SK-N-SH (cell line): ENCODE measurements at regions of chr1 and their contacts with region 1.

Region 1: GRCh38 chr1:1019122-1019999 is 559 bp upstream of the AGRN start:
- DNase-seq: peak; percentile 99
- H3K4me3 ChIP-seq: peak overlapping the region in 1 of 2 experiments; percentile 50; a peak in 2 of 4 replicates
- H3K27ac ChIP-seq: peak overlapping the region in 1 of 2 experiments; percentile 81; a peak in 2 of 4 replicates
- H3K4me1 ChIP-seq: peaks cover 0 to 10% of the 10 kb centered on the region in 2 experiments; a peak in 1 of 4 replicates
- H3K27me3 ChIP-seq: no peaks in the 10 kb centered on the region
- CTCF ChIP-seq: peak; percentile 44
- EP300 ChIP-seq: no peak
- RAD21 ChIP-seq: no peak

Region 2: DNA sequence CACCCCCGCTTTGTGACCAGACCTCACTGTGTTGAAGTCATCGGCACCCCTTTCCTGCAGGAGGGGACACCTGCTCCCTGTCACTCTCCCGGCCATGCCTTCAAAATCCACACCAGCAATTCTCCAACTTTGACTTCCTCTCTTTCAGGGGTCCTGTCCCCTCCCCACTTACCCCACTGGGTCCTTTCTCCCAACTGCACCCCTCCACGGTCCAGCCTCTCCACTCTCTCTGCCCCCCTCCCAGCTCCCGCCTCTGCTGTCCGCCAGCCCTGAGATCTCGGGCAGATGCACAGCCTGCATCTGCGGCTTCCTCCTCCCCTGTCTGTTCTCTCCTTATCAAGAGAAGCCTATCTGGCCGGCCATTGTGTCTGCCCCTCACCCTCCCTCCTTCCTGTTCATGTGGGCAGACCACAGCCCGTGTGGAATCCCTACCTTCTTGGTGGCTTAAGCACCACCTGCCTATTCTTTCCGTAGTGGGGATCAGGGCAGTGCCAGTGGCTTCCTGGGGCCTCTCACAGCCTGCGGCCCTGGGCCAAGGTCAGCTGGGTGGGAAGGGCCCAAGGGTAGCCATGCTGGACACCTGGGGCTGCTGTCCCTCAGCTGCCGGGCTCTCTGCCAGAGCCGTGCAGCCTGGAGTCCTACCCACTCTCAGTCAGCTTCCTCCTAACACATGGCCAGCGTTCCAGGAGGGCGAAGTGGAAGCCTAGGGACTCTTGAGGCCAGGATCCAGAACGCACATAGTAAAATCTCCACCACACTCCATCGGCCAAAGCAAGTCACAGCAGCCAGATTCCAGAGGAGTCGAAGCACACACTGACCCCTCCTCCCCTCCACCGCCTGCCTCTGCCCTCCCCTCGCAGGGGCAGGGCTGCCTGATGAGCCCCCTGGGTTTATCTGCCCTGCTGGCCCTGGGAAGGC is 14.3 kb before region 1 on chr1:
- CTCF ChIA-PET with region 1: interaction called, 46 read pairs
- POLR2A ChIA-PET with region 1: interaction called, 5 read pairs
- DNase-seq: peak; percentile 90
- H3K4me3 ChIP-seq: peak overlapping the region in 1 of 2 experiments; percentile 18; a peak in 1 of 4 replicates
- H3K27ac ChIP-seq: peak overlapping the region in 1 of 2 experiments; percentile 98; a peak in 2 of 4 replicates
- H3K4me1 ChIP-seq: peaks cover 0 to 43% of the 10 kb centered on the region in 2 experiments; a peak in 1 of 4 replicates
- H3K27me3 ChIP-seq: peaks cover 7% of the 10 kb centered on the region; the same call in 1 of the 2 replicates
- CTCF ChIP-seq: no peak
- EP300 ChIP-seq: peak in 1 of 2 experiments; percentile 25; a peak in 1 of 4 replicates
- RAD21 ChIP-seq: no peak